Activated T-helper 2 cell treated with anti-CD3 and anti-CD28 coated beads, Interferon-gamma antibody, Interleukin-2, Interleukin-4, amounts not matched to agents 10 μg/mL and 5 μg/mL and 100 μg/mL, durations not matched to agents 14 hours and 24 hours and 36 hours (primary cell): ENCODE measurements at regions of chr4 and their contacts with region 1.

Region 1: GRCh38 chr4:121252224-121252806 is 88.2 kb upstream of the TNIP3 start:
- DNase-seq: peak; percentile 28
- H3K4me3 Mint-ChIP-seq: no peak overlapping the region
- H3K27ac Mint-ChIP-seq: no peak overlapping the region
- H3K4me1 Mint-ChIP-seq: peaks cover 55% of the 10 kb centered on the region
- H3K27me3 Mint-ChIP-seq: peaks cover 1% of the 10 kb centered on the region

Region 2: DNA sequence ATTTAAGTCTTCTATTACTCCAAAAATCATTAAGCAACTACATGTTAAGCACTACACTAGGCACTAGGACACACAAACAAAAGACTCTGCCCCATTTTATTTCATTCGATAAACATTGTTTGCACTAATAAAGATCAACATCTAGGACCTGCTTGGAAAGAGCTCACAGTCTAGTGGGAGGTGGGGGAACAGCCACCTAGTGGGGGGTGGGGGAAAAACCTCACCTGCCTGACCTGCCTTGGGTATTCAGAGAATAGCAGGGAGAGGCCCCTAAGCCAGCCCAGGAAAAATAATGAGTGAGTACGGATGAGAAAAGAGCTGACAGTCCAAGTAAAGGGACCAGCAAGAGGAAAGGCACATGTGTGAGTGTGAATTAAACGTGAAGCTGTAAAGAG is 382.0 kb before region 1 on chr4:
- intact Hi-C with region 1: no loop called
- DNase-seq: no peak
- H3K4me3 Mint-ChIP-seq: no peak overlapping the region
- H3K27ac Mint-ChIP-seq: no peak overlapping the region
- H3K4me1 Mint-ChIP-seq: no peaks in the 10 kb centered on the region
- H3K27me3 Mint-ChIP-seq: peaks cover 5% of the 10 kb centered on the region

Region 3: DNA sequence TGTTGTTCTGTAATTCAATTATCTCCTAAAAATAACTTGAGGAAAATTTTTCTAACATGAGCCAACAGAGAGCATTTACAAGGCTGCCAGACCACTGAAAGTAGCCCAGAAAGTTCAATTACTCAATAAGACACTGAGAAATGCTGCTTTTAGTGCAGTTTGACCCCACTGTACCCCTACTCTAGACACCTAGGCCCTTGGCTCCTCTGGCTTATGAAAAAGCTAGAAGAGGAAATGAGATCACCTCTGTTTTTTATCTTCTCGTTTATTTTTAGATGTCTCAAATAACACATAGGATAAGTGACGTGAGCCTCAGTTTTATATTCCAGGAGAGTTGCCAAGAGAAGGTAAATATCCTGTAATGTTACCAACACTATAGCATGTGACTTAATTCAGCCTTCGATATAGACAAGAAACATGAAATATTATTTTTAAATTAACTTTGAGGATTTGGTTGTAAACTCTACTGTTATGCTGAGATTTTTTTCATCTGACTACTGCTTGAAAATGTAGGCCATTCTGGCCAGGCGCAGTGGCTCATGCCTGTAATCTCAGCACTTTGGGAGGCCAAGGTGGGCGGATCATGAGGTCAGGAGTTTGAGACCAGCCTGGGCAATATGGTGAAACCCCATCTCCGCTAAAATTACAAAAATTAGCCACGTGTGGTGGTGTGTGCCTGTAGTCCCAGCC is 112.6 kb before region 1 on chr4:
- intact Hi-C with region 1: loop called (anchors 2 kb)
- DNase-seq: no peak
- H3K4me3 Mint-ChIP-seq: no peak overlapping the region
- H3K27ac Mint-ChIP-seq: peak overlapping the region; percentile 58
- H3K4me1 Mint-ChIP-seq: peaks cover 47% of the 10 kb centered on the region
- H3K27me3 Mint-ChIP-seq: no peaks in the 10 kb centered on the region

Region 4: DNA sequence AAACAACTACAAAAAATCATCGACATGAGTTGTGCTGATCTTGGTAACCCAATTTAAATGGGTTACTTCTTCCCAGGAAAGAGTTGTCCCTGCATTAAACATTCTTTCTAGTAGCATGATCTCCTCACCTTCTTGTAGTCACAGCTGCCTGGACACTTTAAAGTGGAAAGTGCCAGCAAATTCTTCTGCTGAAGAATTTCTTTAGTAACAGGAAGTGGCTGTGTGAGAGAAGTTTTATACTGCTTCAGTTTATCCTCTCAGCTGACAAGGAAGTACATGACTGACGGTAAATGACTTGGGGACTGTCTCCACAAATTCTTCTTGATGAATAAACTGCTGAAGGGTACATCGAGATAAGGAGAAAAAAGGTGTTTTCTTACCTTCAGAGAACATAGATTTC is 70.0 kb before region 1 on chr4:
- intact Hi-C with region 1: loop called (anchors 2 kb)
- DNase-seq: no peak
- H3K4me3 Mint-ChIP-seq: peak overlapping the region; percentile 73
- H3K27ac Mint-ChIP-seq: peak overlapping the region; percentile 87
- H3K4me1 Mint-ChIP-seq: peaks cover 51% of the 10 kb centered on the region
- H3K27me3 Mint-ChIP-seq: peaks cover 4% of the 10 kb centered on the region

Region 5: DNA sequence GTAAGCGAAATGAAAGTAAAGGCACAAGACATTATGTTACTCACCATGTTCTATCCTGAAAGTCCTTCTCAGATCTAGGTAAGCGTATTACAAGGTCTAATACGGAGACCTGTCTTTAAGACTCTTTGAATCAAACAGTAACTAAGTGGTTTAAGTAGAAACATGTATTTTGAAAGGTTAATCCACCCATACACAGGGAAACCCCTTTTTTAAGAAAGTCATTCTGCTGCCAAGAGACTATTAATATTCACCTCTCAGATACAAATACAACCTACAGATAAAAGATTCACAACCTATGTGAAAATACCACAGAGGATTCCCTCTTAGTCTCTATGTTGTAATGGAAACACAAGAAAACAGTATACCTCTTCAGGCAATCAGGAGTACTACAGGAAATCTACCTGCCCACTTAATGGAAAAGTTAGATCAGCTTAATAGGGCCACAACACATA is 24.9 kb before region 1 on chr4:
- intact Hi-C with region 1: loop called (anchors 1 kb)
- DNase-seq: no peak
- H3K4me3 Mint-ChIP-seq: peak overlapping the region; percentile 76
- H3K27ac Mint-ChIP-seq: peak overlapping the region; percentile 64
- H3K4me1 Mint-ChIP-seq: peaks cover 28% of the 10 kb centered on the region
- H3K27me3 Mint-ChIP-seq: peaks cover under 1% of the 10 kb centered on the region

Region 6: GRCh38 chr4:121397941-121398601 is 145.8 kb after region 1 on chr4:
- intact Hi-C with region 1: no loop called
- DNase-seq: no peak
- H3K4me3 Mint-ChIP-seq: no peak overlapping the region
- H3K27ac Mint-ChIP-seq: no peak overlapping the region
- H3K4me1 Mint-ChIP-seq: no peaks in the 10 kb centered on the region
- H3K27me3 Mint-ChIP-seq: peaks cover 2% of the 10 kb centered on the region

Region 7: GRCh38 chr4:121696581-121697461 is 444.5 kb after region 1 on chr4 and contains the start of gene ANXA5:
- intact Hi-C with region 1: loop called (anchors 1 kb)
- DNase-seq: peak; percentile 73
- H3K4me3 Mint-ChIP-seq: peak within 1 kb of the TSS; percentile 97
- H3K27ac Mint-ChIP-seq: peak within 1 kb of the TSS; percentile 97
- H3K4me1 Mint-ChIP-seq: peaks cover 35% of the 10 kb centered on the region
- H3K27me3 Mint-ChIP-seq: peaks cover 41% of the 10 kb centered on the region
- total RNA-seq, gene ANXA5: 105 and 107 TPM in 2 replicates